ENCODE measurements at regions of chr12 and their contacts with region 1.

Region 1: GRCh38 chr12:118120579-118121363 is 15.2 kb upstream of the PEBP1 start:
- DNase-seq: peak; percentile 47 to 68 (median 59)
- H3K4me3 ChIP-seq: no peak overlapping the region
- H3K4me3 Mint-ChIP-seq: peak overlapping the region in 6 of 8 donors; percentile 5 to 70 (median 20)
- H3K27ac ChIP-seq: peak overlapping the region; percentile 47
- H3K27ac Mint-ChIP-seq: peak overlapping the region; percentile 76 to 96 (median 86)
- H3K4me1 ChIP-seq: peaks cover 10% of the 10 kb centered on the region
- H3K4me1 Mint-ChIP-seq: peaks cover 6 to 17% (median 11%) of the 10 kb centered on the region in 4 donors
- H3K27me3 ChIP-seq: no peaks in the 10 kb centered on the region
- H3K27me3 Mint-ChIP-seq: no peaks in the 10 kb centered on the region

Region 2: GRCh38 chr12:118061011-118061875 is 59.5 kb before region 1 on chr12 and contains the start of gene WSB2:
- CTCF ChIA-PET with region 1: interaction called, 13 read pairs
- POLR2A ChIA-PET with region 1: no interaction called
- intact Hi-C with region 1: no loop called
- DNase-seq: peak; percentile 34 to 57 (median 42)
- H3K4me3 ChIP-seq: peak within 1 kb of the TSS; percentile 84 to 96
- H3K4me3 Mint-ChIP-seq: peak within 1 kb of the TSS; percentile 92 to 98 (median 96)
- H3K27ac ChIP-seq: peak within 1 kb of the TSS; percentile 81
- H3K27ac Mint-ChIP-seq: peak within 1 kb of the TSS; percentile 92 to 97 (median 96)
- H3K4me1 ChIP-seq: peaks cover 53% of the 10 kb centered on the region
- H3K4me1 Mint-ChIP-seq: peaks cover 26 to 66% (median 46%) of the 10 kb centered on the region in 4 donors
- H3K27me3 ChIP-seq: no peaks in the 10 kb centered on the region
- H3K27me3 Mint-ChIP-seq: no peaks in the 10 kb centered on the region
- total RNA-seq, gene WSB2: 24.4 to 31.5 TPM

Region 3: DNA sequence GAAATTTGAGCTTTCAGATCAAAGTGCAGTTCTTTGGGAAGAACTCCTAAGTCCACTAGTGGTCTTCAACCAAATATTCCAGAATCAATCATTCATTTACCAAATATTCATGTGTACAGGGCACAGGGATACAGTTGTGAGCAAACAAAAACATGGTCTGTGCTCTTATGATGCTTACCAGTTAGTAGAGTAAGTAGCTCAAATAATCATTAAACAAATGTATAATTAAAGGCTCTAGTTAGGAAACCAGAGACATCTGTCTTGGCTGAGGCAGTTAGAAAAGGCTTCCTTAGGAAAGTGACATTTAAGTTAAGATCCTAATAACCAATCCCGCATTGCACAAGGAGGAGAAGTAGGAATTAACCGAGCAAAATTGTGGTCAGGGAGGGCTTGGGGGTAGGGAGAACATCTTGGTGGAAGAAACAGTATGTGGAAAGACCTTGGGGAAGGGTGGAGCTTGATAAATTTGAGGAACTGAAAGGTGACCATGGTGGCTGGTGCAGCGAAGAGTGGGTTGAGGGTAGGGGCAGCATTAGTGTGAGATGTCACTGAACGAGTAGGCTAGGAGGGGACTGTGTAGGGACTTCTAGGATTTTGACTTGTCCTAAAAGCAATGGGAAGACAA is 55.2 kb after region 1 on chr12:
- CTCF ChIA-PET with region 1: interaction called, 12 read pairs
- POLR2A ChIA-PET with region 1: no interaction called
- intact Hi-C with region 1: no loop called
- DNase-seq: no peak
- H3K4me3 ChIP-seq: no peak overlapping the region
- H3K4me3 Mint-ChIP-seq: no peak overlapping the region
- H3K27ac ChIP-seq: no peak overlapping the region
- H3K27ac Mint-ChIP-seq: peak overlapping the region in 3 of 7 donors; percentile 5 to 37 (median 24)
- H3K4me1 ChIP-seq: no peaks in the 10 kb centered on the region
- H3K4me1 Mint-ChIP-seq: peaks cover 0 to 4% (median 0%) of the 10 kb centered on the region in 4 donors
- H3K27me3 ChIP-seq: no peaks in the 10 kb centered on the region
- H3K27me3 Mint-ChIP-seq: no peaks in the 10 kb centered on the region

Region 4: GRCh38 chr12:118259079-118259478 is 138.3 kb after region 1 on chr12:
- CTCF ChIA-PET with region 1: no interaction called
- POLR2A ChIA-PET with region 1: no interaction called
- intact Hi-C with region 1: no loop called
- DNase-seq: no peak
- H3K4me3 ChIP-seq: no peak overlapping the region
- H3K4me3 Mint-ChIP-seq: no peak overlapping the region
- H3K27ac ChIP-seq: no peak overlapping the region
- H3K27ac Mint-ChIP-seq: peak overlapping the region in 1 of 7 donors; percentile 6
- H3K4me1 ChIP-seq: no peaks in the 10 kb centered on the region
- H3K4me1 Mint-ChIP-seq: peaks cover 5 to 16% (median 14%) of the 10 kb centered on the region in 4 donors
- H3K27me3 ChIP-seq: no peaks in the 10 kb centered on the region
- H3K27me3 Mint-ChIP-seq: no peaks in the 10 kb centered on the region

Measured in CD4-positive, alpha-beta memory T cell (primary cell).